Transverse colon (tissue), 4 donors: ENCODE measurements at regions of chr16 and their contacts with region 1.

Region 1: DNA sequence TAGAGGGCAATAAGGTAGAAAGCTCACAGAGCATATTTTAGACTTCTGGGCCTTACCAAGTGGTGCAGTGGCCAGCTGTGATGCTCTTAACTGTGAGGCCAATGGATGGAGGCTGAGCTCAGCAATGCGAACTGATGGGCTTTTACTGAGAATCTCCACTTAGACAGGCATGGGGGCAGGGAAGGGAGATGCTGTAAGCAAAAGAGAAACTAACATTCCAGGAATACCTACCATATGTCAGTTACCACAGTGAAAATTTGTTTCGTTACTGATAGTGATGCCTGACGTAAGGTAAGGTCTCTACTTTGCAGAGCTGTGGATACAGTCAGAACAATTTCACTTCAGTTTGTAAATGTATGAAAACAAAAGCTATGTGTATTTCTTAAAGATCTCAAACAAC is 250.6 kb upstream of the ZFHX3 start:
- DNase-seq: no peak
- H3K4me3 ChIP-seq: no peak overlapping the region
- H3K27ac ChIP-seq: no peak overlapping the region
- H3K4me1 ChIP-seq: no peaks in the 10 kb centered on the region
- H3K27me3 ChIP-seq: no peaks in the 10 kb centered on the region
- CTCF ChIP-seq: no peak
- EP300 ChIP-seq: no peak
- POLR2A ChIP-seq: no peak

Region 2: DNA sequence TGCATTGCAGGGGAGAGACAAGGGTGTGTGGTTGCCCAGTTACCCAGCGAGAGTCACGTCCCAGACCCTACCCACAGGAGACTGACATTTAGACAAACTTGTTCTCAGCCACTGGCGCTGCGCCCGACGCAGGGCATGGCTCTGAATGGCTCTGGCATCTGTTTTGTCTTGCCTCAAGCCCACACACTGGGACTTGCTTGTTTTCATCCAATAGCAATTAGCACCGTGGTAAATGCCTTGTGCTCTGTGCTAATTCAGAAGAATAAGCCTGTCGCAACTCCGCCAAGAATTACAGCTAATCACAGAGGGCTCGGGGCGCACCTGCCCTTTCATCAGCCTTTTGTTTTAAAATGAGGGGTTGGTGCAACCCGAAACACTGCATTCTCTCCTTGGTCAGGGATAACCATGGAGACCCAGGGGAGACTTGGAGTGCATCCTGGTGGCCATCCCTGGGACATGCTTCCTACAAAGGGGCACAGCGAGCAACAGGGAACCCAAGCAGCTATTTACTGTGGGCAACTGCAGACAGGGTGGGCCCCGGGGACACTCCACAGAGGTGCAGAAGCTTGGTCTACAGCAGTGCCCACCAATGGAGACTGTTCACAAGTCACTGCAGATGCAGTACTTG is 30.1 kb before region 1 on chr16:
- in situ Hi-C with region 1: no loop called
- intact Hi-C with region 1: loop called (anchors 1 kb)
- DNase-seq: no peak
- H3K4me3 ChIP-seq: no peak overlapping the region
- H3K27ac ChIP-seq: no peak overlapping the region
- H3K4me1 ChIP-seq: no peaks in the 10 kb centered on the region
- H3K27me3 ChIP-seq: no peaks in the 10 kb centered on the region
- CTCF ChIP-seq: no peak
- EP300 ChIP-seq: no peak
- POLR2A ChIP-seq: no peak

Region 3: GRCh38 chr16:73432850-73433730 is 134.5 kb after region 1 on chr16:
- in situ Hi-C with region 1: no loop called
- intact Hi-C with region 1: no loop called
- DNase-seq: no peak
- H3K4me3 ChIP-seq: no peak overlapping the region
- H3K27ac ChIP-seq: no peak overlapping the region
- H3K4me1 ChIP-seq: no peaks in the 10 kb centered on the region
- H3K27me3 ChIP-seq: no peaks in the 10 kb centered on the region
- CTCF ChIP-seq: no peak
- EP300 ChIP-seq: no peak
- POLR2A ChIP-seq: no peak